B cell (primary cell): ENCODE measurements at regions of chr20 and their contacts with region 1.

Region 1: DNA sequence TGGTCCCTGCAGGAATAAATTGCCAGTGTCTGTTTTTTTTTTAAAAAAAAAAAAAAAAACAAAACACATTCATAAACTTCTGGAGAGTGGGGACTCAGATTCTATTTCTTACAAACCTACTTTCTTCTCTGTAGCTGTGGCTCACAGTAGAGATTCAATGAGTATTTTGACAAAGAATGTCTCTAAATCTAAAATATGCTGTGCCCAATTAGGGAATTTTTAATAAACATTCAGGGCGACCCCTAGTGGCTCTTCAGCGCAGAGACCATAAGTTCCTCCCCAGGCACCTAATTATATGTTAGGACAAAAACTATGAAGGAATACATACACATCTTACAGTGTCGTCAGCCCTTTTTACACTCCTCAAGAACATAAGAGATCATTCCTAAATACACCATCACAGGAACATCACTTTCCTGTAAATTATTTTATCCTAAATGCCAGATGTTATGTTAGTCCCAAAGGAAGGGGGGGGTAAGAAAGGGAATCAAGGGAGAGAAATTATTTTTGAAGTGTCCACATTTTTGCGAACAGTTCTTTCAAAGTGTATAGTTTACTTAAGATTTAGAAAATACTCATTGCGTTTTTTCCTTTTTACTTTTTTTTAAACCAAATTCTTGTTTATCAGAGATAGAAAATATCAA is 21.8 kb upstream of the NAA20 start:
- DNase-seq: peak; percentile 74
- ATAC-seq: peak; percentile 45
- H3K4me3 ChIP-seq: no peak overlapping the region
- H3K4me3 Mint-ChIP-seq: no peak overlapping the region
- H3K27ac ChIP-seq: no peak overlapping the region
- H3K27ac Mint-ChIP-seq: no peak overlapping the region
- H3K4me1 ChIP-seq: no peaks in the 10 kb centered on the region
- H3K4me1 Mint-ChIP-seq: no peaks in the 10 kb centered on the region
- H3K27me3 ChIP-seq: no peaks in the 10 kb centered on the region
- H3K27me3 Mint-ChIP-seq: peaks cover 10% of the 10 kb centered on the region
- CTCF ChIP-seq: peak; percentile 94

Region 2: DNA sequence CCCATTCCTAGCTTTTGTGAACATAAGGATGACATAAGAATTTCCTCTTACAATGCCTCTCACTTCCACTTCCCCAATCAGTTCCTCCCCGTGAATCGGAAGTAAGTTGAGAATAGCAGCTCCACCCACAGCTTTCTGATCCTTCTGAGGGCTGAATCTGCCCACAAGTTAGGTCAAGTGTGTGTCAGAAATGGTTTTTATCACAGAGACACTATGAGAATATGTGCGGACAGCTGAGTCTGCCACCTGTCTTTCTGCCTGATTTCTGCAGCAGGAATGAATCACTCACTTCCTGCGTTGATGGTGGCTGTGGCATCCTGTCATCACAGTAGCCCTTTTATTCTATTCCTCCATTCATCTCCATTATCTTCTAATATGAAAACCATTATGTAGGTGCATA is 167.1 kb before region 1 on chr20:
- CTCF ChIA-PET with region 1: interaction called, 4 read pairs
- POLR2A ChIA-PET with region 1: no interaction called
- intact Hi-C with region 1: loop called (anchors 1 kb)
- DNase-seq: peak; percentile 84
- ATAC-seq: peak; percentile 91
- H3K4me3 ChIP-seq: no peak overlapping the region
- H3K4me3 Mint-ChIP-seq: peak overlapping the region; percentile 12
- H3K27ac ChIP-seq: peak overlapping the region; percentile 44 to 48
- H3K27ac Mint-ChIP-seq: peak overlapping the region; percentile 66
- H3K4me1 ChIP-seq: peaks cover 58 to 63% of the 10 kb centered on the region in 2 donors
- H3K4me1 Mint-ChIP-seq: peaks cover 62% of the 10 kb centered on the region
- H3K27me3 ChIP-seq: no peaks in the 10 kb centered on the region
- H3K27me3 Mint-ChIP-seq: peaks cover under 1% of the 10 kb centered on the region
- CTCF ChIP-seq: peak; percentile 50

Region 3: GRCh38 chr20:20440886-20441654 is 445.7 kb after region 1 on chr20:
- CTCF ChIA-PET with region 1: no interaction called
- POLR2A ChIA-PET with region 1: no interaction called
- intact Hi-C with region 1: no loop called
- DNase-seq: no peak
- ATAC-seq: no peak
- H3K4me3 ChIP-seq: no peak overlapping the region
- H3K4me3 Mint-ChIP-seq: no peak overlapping the region
- H3K27ac ChIP-seq: no peak overlapping the region
- H3K27ac Mint-ChIP-seq: no peak overlapping the region
- H3K4me1 ChIP-seq: peaks cover 10% of the 10 kb centered on the region in 2 donors
- H3K4me1 Mint-ChIP-seq: peaks cover 18% of the 10 kb centered on the region
- H3K27me3 ChIP-seq: no peaks in the 10 kb centered on the region
- H3K27me3 Mint-ChIP-seq: no peaks in the 10 kb centered on the region
- CTCF ChIP-seq: no peak